ENCODE measurements at regions of chr15 and their contacts with region 1.

Region 1: DNA sequence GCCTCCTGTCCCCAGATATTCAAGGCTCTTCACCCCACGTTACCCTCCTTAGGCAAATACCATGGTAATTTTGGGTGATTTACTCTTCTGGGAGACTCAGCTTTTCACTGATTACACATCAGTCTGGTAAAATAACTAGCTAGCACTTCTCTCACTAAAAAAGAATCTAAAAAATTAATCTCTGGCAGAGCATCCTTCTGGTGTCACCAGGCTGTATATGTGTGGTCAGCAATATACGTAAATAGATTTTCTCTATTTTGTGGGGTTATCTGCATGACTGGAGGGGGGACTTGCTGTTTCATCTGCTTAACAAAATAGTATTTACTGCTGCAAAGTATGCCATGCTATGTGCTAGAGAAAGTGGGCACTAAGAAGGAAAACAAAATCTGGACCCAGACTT is 45.1 kb downstream of the LRRC28 start:
- DNase-seq: no peak
- ATAC-seq: no peak
- H3K4me3 ChIP-seq: no peak overlapping the region
- H3K4me3 Mint-ChIP-seq: no peak overlapping the region
- H3K27ac ChIP-seq: no peak overlapping the region
- H3K27ac Mint-ChIP-seq: no peak overlapping the region
- H3K4me1 ChIP-seq: no peaks in the 10 kb centered on the region
- H3K4me1 Mint-ChIP-seq: no peaks in the 10 kb centered on the region
- H3K27me3 ChIP-seq: no peaks in the 10 kb centered on the region
- H3K27me3 Mint-ChIP-seq: no peaks in the 10 kb centered on the region

Region 2: GRCh38 chr15:99390660-99391059 is 94.3 kb after region 1 on chr15:
- CTCF ChIA-PET with region 1: no interaction called
- POLR2A ChIA-PET with region 1: no interaction called
- DNase-seq: no peak
- ATAC-seq: no peak
- H3K4me3 ChIP-seq: no peak overlapping the region
- H3K4me3 Mint-ChIP-seq: no peak overlapping the region
- H3K27ac ChIP-seq: no peak overlapping the region
- H3K27ac Mint-ChIP-seq: no peak overlapping the region
- H3K4me1 ChIP-seq: peaks cover 7 to 15% of the 10 kb centered on the region in 2 experiments
- H3K4me1 Mint-ChIP-seq: peaks cover 15 to 32% (median 28%) of the 10 kb centered on the region in 3 donors
- H3K27me3 ChIP-seq: no peaks in the 10 kb centered on the region
- H3K27me3 Mint-ChIP-seq: no peaks in the 10 kb centered on the region

Region 3: DNA sequence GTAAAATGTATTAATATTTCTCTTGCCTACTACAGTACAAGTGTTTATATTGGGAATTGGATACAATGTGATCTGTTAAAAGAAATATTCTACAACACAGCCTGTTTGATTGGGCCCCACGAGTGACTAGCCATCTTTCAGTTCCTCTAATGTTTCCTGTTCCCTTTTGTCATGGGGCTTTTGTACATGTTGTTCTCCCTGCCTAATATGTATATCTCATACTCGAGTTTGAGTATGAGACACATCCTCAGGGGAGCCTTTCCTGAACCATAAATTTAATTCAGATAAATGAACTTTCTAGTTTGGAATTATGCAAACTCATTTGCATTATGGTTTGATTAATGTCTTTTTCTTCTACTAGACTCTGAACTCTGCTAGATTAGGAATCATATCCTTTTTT is 334.9 kb after region 1 on chr15:
- CTCF ChIA-PET with region 1: no interaction called
- POLR2A ChIA-PET with region 1: no interaction called
- DNase-seq: no peak
- ATAC-seq: no peak
- H3K4me3 ChIP-seq: no peak overlapping the region
- H3K4me3 Mint-ChIP-seq: no peak overlapping the region
- H3K27ac ChIP-seq: no peak overlapping the region
- H3K27ac Mint-ChIP-seq: no peak overlapping the region
- H3K4me1 ChIP-seq: peaks cover 0 to 9% of the 10 kb centered on the region in 2 experiments
- H3K4me1 Mint-ChIP-seq: peaks cover 47 to 62% (median 57%) of the 10 kb centered on the region in 3 donors
- H3K27me3 ChIP-seq: no peaks in the 10 kb centered on the region
- H3K27me3 Mint-ChIP-seq: no peaks in the 10 kb centered on the region

Region 4: DNA sequence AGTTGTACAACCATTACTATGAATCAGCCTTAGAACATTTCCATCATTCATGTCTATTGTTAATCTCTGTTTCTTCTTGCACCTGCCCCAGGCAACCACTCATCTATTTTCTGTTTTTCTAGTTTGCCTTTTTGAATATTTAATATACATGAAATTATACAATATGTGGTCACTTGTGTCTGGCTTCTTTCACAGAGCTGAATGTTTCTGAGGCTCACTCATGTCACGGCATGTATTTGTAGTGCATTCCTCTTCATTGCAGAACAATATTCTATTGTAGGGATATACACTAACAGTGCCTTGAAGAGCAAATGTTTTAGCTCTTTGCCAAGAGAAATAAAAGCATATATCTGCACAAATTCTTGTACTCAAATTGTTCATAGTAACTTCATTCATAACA is 1199.5 kb after region 1 on chr15:
- CTCF ChIA-PET with region 1: no interaction called
- POLR2A ChIA-PET with region 1: interaction called in 1 of 2 experiments, 13 read pairs
- DNase-seq: no peak
- ATAC-seq: no peak
- H3K4me3 ChIP-seq: no peak overlapping the region
- H3K4me3 Mint-ChIP-seq: no peak overlapping the region
- H3K27ac ChIP-seq: no peak overlapping the region
- H3K27ac Mint-ChIP-seq: no peak overlapping the region
- H3K4me1 ChIP-seq: no peaks in the 10 kb centered on the region
- H3K4me1 Mint-ChIP-seq: no peaks in the 10 kb centered on the region
- H3K27me3 ChIP-seq: peaks cover 0 to 4% of the 10 kb centered on the region in 2 experiments
- H3K27me3 Mint-ChIP-seq: peaks cover 4 to 9% of the 10 kb centered on the region in 2 donors

Measured in T-cell (primary cell).